ENCODE measurements at regions of chr1 and their contacts with region 1.

Region 1: DNA sequence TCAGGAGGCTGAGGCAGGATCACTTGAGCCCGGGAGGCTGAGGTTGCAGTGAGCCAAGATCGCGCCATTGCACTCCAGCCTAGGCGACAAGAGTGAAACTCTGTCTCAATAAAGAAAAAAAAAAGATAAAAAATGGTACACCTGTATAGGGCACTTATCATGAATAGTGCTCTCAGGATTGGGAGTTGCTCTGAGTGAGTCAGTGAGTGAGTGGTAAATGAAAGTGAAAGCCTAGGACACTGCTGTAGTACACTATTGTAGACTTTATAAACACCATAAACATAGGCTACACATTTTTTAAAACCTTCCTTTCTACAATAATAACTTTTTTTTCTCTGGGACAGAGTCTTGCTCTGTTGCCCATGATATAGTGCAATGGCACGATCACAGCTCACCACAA is 16.8 kb downstream of the PHTF1 start:
- DNase-seq: peak; percentile 67
- H3K4me3 Mint-ChIP-seq: peak overlapping the region; percentile 46
- H3K27ac Mint-ChIP-seq: peak overlapping the region; percentile 47
- H3K4me1 Mint-ChIP-seq: peaks cover 14% of the 10 kb centered on the region
- H3K27me3 Mint-ChIP-seq: no peaks in the 10 kb centered on the region

Region 2: DNA sequence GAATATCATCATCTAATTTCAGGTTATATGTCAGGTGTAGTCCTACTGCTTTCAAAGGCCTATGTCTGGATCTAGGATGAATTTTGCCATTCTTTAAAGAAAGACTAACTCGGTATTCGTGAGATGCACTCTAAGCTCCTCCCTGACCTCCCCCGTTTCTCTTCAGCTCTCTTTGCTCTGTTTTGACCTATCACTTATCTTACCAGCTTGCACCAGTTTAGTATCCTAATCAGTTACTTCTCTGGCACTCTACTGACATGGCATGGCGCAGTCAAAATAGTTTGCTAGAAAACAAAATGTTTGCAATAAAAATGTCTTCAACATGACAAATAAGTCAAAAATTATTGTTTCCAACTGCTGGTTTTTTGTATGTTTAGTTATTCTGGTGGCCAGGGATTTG is 778.2 kb before region 1 on chr1:
- intact Hi-C with region 1: loop called (anchors 5 kb)
- DNase-seq: no peak
- H3K4me3 Mint-ChIP-seq: no peak overlapping the region
- H3K27ac Mint-ChIP-seq: no peak overlapping the region
- H3K4me1 Mint-ChIP-seq: peaks cover 34% of the 10 kb centered on the region
- H3K27me3 Mint-ChIP-seq: no peaks in the 10 kb centered on the region

Region 3: GRCh38 chr1:113759333-113760101 is 17.0 kb after region 1 on chr1 and contains the start of gene PHTF1:
- intact Hi-C with region 1: loop called (anchors 2 kb)
- DNase-seq: peak; percentile 89
- H3K4me3 Mint-ChIP-seq: peak within 1 kb of the TSS; percentile 97
- H3K27ac Mint-ChIP-seq: peak within 1 kb of the TSS; percentile 97
- H3K4me1 Mint-ChIP-seq: peaks cover 30% of the 10 kb centered on the region
- H3K27me3 Mint-ChIP-seq: no peaks in the 10 kb centered on the region
- total RNA-seq, gene PHTF1: 15.6 and 19.2 TPM in 2 replicates

Measured in activated CD4-positive, alpha-beta T cell treated with anti-CD3 and anti-CD28 coated beads, Interleukin-2, amount 10 ng/mL, durations not matched to agents 24 days and 14 days (primary cell).